ENCODE measurements at regions of chr12 and their contacts with region 1.

Region 1: GRCh38 chr12:113310489-113310888 is 24.4 kb downstream of the SLC8B1 start:
- DNase-seq: peak; percentile 44
- H3K4me3 ChIP-seq: no peak overlapping the region
- H3K27ac ChIP-seq: no peak overlapping the region
- H3K4me1 ChIP-seq: no peaks in the 10 kb centered on the region
- H3K27me3 ChIP-seq: no peaks in the 10 kb centered on the region
- CTCF ChIP-seq: peak; percentile 41; the same call in 1 of the 2 replicates

Region 2: GRCh38 chr12:113252456-113252855 is 58.0 kb before region 1 on chr12:
- CTCF ChIA-PET with region 1: no interaction called
- POLR2A ChIA-PET with region 1: no interaction called
- intact Hi-C with region 1: no loop called
- DNase-seq: no peak
- H3K4me3 ChIP-seq: no peak overlapping the region
- H3K27ac ChIP-seq: no peak overlapping the region
- H3K4me1 ChIP-seq: no peaks in the 10 kb centered on the region
- H3K27me3 ChIP-seq: no peaks in the 10 kb centered on the region
- CTCF ChIP-seq: no peak

Region 3: GRCh38 chr12:113381220-113381619 is 70.7 kb after region 1 on chr12:
- CTCF ChIA-PET with region 1: no interaction called
- POLR2A ChIA-PET with region 1: no interaction called
- intact Hi-C with region 1: loop called (anchors 10 kb)
- DNase-seq: no peak
- H3K4me3 ChIP-seq: no peak overlapping the region
- H3K27ac ChIP-seq: no peak overlapping the region
- H3K4me1 ChIP-seq: no peaks in the 10 kb centered on the region
- H3K27me3 ChIP-seq: no peaks in the 10 kb centered on the region
- CTCF ChIP-seq: no peak

Region 4: GRCh38 chr12:113422030-113422885 is 111.8 kb after region 1 on chr12 and contains the start of gene SDSL:
- CTCF ChIA-PET with region 1: interaction called, 3 read pairs
- POLR2A ChIA-PET with region 1: no interaction called
- intact Hi-C with region 1: loop called (anchors 2 kb)
- DNase-seq: peak; percentile 54
- H3K4me3 ChIP-seq: peak within 1 kb of the TSS; percentile 26
- H3K27ac ChIP-seq: no peak within 1 kb of the TSS
- H3K4me1 ChIP-seq: no peaks in the 10 kb centered on the region
- H3K27me3 ChIP-seq: no peaks in the 10 kb centered on the region
- CTCF ChIP-seq: no peak
- total RNA-seq, gene SDSL: 0.37 and 1.2 TPM in 2 replicates